GM12878 (cell line): ENCODE measurements at regions of chr11 and their contacts with region 1.

Region 1: DNA sequence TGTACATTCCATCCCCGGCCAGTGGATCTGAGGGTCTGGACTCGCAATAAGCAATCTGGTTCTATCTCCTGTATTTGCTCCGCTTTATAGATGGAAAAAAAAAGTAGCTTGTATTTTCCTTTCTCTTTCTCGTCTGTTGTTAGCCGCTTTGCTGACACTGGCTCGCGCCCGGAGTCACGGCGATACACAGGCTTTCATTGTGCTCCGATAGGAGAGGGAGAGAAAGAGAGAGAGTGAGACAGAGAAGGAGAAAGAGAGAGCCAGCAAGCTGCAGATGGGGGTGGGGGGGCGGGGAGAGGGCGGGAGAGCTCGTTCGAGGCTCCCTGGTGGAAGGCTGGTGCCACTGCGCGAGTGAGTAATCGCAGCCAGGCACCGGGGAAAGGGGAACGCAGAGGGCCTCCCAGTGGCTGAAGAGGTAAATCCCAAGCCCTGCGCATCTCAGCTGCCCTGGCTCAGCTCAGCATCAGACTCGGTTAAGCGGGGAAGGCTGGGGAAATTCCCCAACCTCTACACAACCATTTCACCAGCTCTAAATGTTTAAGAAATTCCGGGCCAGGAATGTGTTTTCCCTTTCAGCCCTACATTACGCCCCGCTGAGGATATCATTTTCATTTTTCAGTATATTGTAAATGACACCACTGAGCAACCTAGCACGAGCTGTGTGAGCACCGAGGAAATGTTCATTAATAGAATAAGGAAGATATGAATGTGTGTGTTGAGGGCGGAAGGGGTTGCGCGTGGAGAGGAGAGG is at the start of gene MAML2:
- DNase-seq: peak; percentile 91
- ATAC-seq: peak; percentile 81
- H3K4me3 ChIP-seq: peak within 1 kb of the TSS; percentile 100
- H3K27ac ChIP-seq: peak within 1 kb of the TSS; percentile 80
- H3K4me1 ChIP-seq: peaks cover 12% of the 10 kb centered on the region
- H3K27me3 ChIP-seq: no peaks in the 10 kb centered on the region
- CTCF ChIP-seq: peak; percentile 93 to 98 (median 96)
- EP300 ChIP-seq: no peak; a peak in 1 of 4 replicates
- POLR2A ChIP-seq: no peak; the same call in 1 of the 2 replicates
- RAD21 ChIP-seq: peak; percentile 90
- polyA plus RNA-seq, gene MAML2: 2.5 to 2.6 TPM

Region 2: GRCh38 chr11:95923728-95924413 is 419.3 kb before region 1 on chr11 and contains the start of gene MTMR2:
- CTCF ChIA-PET with region 1: no interaction called
- POLR2A ChIA-PET with region 1: no interaction called
- RAD21 ChIA-PET with region 1: interaction called, 4 read pairs
- SMC1A ChIA-PET with region 1: interaction called, 4 read pairs
- in situ Hi-C with region 1: no loop called
- intact Hi-C with region 1: loop called (anchors 5 kb)
- DNase-seq: peak; percentile 16
- ATAC-seq: peak; percentile 99
- H3K4me3 ChIP-seq: peak within 1 kb of the TSS; percentile 94
- H3K27ac ChIP-seq: peak within 1 kb of the TSS; percentile 90
- H3K4me1 ChIP-seq: no peaks in the 10 kb centered on the region
- H3K27me3 ChIP-seq: no peaks in the 10 kb centered on the region
- CTCF ChIP-seq: no peak
- EP300 ChIP-seq: peak in 1 of 2 experiments; percentile 23; a peak in 1 of 4 replicates
- POLR2A ChIP-seq: peak; percentile 100
- RAD21 ChIP-seq: no peak
- polyA plus RNA-seq, gene MTMR2: 7.6 to 9.8 TPM

Region 3: DNA sequence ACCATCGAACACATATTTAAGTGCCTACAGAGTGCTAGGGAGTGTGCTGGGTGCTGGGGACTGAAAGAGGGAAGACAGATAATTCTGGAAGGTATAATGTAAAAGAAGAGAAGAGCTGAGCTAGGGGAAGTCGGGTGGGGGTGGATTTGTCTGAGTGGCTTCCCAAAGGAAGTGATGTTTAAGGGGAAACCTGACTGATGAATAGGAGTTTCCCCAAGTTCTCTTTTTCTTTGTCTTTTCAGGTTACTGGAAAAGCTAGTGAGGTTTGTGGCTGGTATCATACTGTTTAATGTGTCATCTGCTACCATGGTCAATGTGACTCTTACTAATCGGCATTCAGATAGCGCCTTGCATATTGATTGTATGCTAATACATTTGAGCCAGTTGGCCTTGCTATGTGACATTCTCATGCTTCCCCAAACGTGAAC is 267.6 kb before region 1 on chr11:
- CTCF ChIA-PET with region 1: interaction called, 13 read pairs
- POLR2A ChIA-PET with region 1: interaction called, 5 read pairs
- RAD21 ChIA-PET with region 1: interaction called, 59 read pairs
- SMC1A ChIA-PET with region 1: interaction called, 32 read pairs
- in situ Hi-C with region 1: no loop called
- intact Hi-C with region 1: loop called (anchors 5 kb)
- DNase-seq: peak; percentile 74
- ATAC-seq: peak; percentile 93
- H3K4me3 ChIP-seq: 0 out of 2 replicates have a peak overlapping the region, but pooled peaks have one; percentile 30
- H3K27ac ChIP-seq: peak overlapping the region; percentile 62
- H3K4me1 ChIP-seq: peaks cover 27% of the 10 kb centered on the region
- H3K27me3 ChIP-seq: no peaks in the 10 kb centered on the region
- CTCF ChIP-seq: no peak
- EP300 ChIP-seq: peak; percentile 17 to 36; a peak in 1 of 4 replicates
- POLR2A ChIP-seq: no peak
- RAD21 ChIP-seq: no peak

Region 4: GRCh38 chr11:96162816-96163499 is 180.2 kb before region 1 on chr11:
- CTCF ChIA-PET with region 1: interaction called, 10 read pairs
- POLR2A ChIA-PET with region 1: no interaction called
- RAD21 ChIA-PET with region 1: interaction called, 7 read pairs
- SMC1A ChIA-PET with region 1: interaction called, 5 read pairs
- in situ Hi-C with region 1: no loop called
- intact Hi-C with region 1: no loop called
- DNase-seq: no peak
- ATAC-seq: no peak
- H3K4me3 ChIP-seq: no peak overlapping the region
- H3K27ac ChIP-seq: no peak overlapping the region
- H3K4me1 ChIP-seq: 0 out of 2 replicates have a peak, but pooled peaks cover 4% of the 10 kb centered on the region
- H3K27me3 ChIP-seq: no peaks in the 10 kb centered on the region
- CTCF ChIP-seq: no peak
- EP300 ChIP-seq: no peak
- POLR2A ChIP-seq: no peak
- RAD21 ChIP-seq: no peak

Region 5: DNA sequence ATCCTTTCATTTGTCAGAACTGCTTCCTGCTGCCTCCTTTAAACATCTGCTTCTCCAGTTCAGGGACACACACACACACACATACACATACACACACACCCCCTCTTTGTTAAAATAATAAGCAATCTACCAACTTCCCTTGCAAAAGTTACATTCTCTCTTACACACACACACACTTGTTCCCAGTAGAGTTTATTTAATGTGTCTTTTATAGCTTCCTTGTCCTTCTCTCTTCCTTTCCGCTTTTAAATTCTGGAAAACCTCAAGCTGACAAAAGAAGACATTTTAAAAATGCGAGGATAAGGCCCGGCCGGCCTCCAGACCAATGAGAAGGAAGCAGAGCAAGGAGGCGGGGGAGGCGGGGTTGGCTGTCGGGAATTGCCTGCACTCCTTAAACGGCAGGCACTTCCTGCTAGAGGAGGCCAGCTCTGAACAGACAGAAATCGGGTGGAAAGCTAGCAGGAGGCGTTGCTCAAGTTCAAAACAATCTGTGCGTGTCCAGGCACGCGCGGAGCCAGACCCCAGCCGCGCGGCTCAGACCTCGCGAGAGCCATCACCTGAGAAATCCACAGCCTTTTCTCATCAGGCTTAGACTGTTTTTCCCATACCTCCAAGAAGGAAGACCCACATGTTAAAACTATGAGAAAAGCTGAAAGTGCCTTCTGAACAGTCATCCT is 100.0 kb before region 1 on chr11:
- CTCF ChIA-PET with region 1: interaction called, 51 read pairs
- POLR2A ChIA-PET with region 1: interaction called, 8 read pairs
- RAD21 ChIA-PET with region 1: interaction called, 93 read pairs
- SMC1A ChIA-PET with region 1: interaction called, 189 read pairs
- in situ Hi-C with region 1: no loop called
- intact Hi-C with region 1: loop called (anchors 5 kb)
- DNase-seq: peak; percentile 86
- ATAC-seq: peak; percentile 93
- H3K4me3 ChIP-seq: peak overlapping the region; percentile 60
- H3K27ac ChIP-seq: peak overlapping the region; percentile 68
- H3K4me1 ChIP-seq: peaks cover 14% of the 10 kb centered on the region; the same call in 1 of the 2 replicates
- H3K27me3 ChIP-seq: no peaks in the 10 kb centered on the region
- CTCF ChIP-seq: no peak
- EP300 ChIP-seq: no peak
- POLR2A ChIP-seq: peak; percentile 73
- RAD21 ChIP-seq: no peak; the same call in 1 of the 2 replicates

Region 6: GRCh38 chr11:96307776-96308140 is 35.4 kb before region 1 on chr11:
- CTCF ChIA-PET with region 1: interaction called, 17 read pairs
- POLR2A ChIA-PET with region 1: no interaction called
- RAD21 ChIA-PET with region 1: interaction called, 10 read pairs
- SMC1A ChIA-PET with region 1: interaction called, 97 read pairs
- in situ Hi-C with region 1: no loop called
- intact Hi-C with region 1: no loop called
- DNase-seq: no peak
- ATAC-seq: no peak
- H3K4me3 ChIP-seq: no peak overlapping the region
- H3K27ac ChIP-seq: no peak overlapping the region
- H3K4me1 ChIP-seq: no peaks in the 10 kb centered on the region
- H3K27me3 ChIP-seq: no peaks in the 10 kb centered on the region
- CTCF ChIP-seq: no peak
- EP300 ChIP-seq: no peak
- POLR2A ChIP-seq: no peak
- RAD21 ChIP-seq: no peak

Region 7: DNA sequence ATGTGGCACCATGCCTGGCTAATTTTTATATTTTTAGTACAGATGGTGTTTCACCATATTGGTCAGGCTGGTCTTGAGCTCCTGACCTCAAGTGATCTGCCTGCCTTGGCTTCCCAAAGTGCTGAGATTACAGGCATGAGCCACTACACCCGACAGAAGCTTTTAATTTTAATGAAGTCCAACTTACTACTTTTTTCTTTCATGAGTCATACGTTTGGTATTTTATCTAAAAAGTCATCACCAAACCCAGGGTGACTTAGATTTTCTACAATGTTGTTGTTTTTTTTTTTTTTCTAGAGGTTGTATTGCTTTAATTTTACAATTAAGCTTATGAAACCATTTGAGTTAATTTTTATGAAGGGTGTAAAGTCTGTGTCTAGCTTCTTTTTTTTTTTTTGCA is 81.6 kb after region 1 on chr11:
- CTCF ChIA-PET with region 1: interaction called, 18 read pairs
- POLR2A ChIA-PET with region 1: no interaction called
- RAD21 ChIA-PET with region 1: interaction called, 14 read pairs
- SMC1A ChIA-PET with region 1: interaction called, 13 read pairs
- in situ Hi-C with region 1: no loop called
- intact Hi-C with region 1: no loop called
- DNase-seq: no peak
- ATAC-seq: no peak
- H3K4me3 ChIP-seq: no peak overlapping the region
- H3K27ac ChIP-seq: no peak overlapping the region
- H3K4me1 ChIP-seq: no peaks in the 10 kb centered on the region
- H3K27me3 ChIP-seq: no peaks in the 10 kb centered on the region
- CTCF ChIP-seq: no peak
- EP300 ChIP-seq: no peak
- POLR2A ChIP-seq: no peak
- RAD21 ChIP-seq: no peak